ENCODE measurements at regions of chr1 and their contacts with region 1.

Region 1: DNA sequence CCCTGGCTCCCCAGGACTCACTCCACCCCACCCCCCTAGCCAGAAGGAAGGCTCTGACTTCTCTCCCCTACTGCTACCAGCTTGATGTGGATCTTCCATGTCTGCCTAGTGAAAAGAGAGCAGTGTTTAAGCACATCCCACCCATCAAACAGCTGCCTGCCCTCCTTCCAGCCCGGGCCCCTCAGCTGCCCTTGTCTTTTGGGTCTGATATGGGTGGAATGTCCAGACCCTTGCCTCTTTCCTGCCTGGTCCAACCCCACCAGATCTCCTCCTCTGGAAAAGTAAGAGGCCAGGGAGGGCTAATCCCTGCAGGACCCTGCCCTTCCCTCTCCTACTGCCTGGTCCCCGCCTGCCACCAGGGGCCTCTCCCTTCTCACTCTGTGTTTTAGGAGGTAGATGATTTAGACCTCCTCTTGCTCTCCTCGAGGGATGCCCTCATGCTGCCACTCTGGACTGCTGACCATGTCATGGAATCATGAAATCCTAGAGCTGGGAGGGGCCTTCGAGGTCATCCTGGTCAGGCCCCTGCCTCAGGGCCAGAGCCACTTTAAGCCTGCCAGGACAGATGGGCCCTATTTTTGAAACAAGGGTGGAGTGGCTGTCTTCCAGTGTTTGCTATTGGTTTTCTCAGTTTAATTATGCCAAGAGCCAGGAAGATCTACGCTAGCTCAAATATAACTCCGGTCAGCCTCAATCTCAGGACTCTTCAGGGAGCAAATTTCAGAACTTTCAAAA is 15.8 kb upstream of the HSPG2 start:
- DNase-seq: no peak
- ATAC-seq: no peak
- H3K4me3 ChIP-seq: no peak overlapping the region
- H3K27ac ChIP-seq: no peak overlapping the region
- H3K4me1 ChIP-seq: peaks cover 21% of the 10 kb centered on the region
- H3K27me3 ChIP-seq: no peaks in the 10 kb centered on the region
- CTCF ChIP-seq: no peak

Region 2: GRCh38 chr1:21919520-21919919 is 33.4 kb before region 1 on chr1:
- CTCF ChIA-PET with region 1: interaction called, 16 read pairs
- POLR2A ChIA-PET with region 1: no interaction called
- in situ Hi-C with region 1: no loop called
- intact Hi-C with region 1: no loop called
- DNase-seq: no peak
- ATAC-seq: peak; percentile 13; the same call in 1 of the 2 replicates
- H3K4me3 ChIP-seq: no peak overlapping the region
- H3K27ac ChIP-seq: peak overlapping the region; percentile 86
- H3K4me1 ChIP-seq: peaks cover 64% of the 10 kb centered on the region
- H3K27me3 ChIP-seq: no peaks in the 10 kb centered on the region
- CTCF ChIP-seq: no peak

Region 3: GRCh38 chr1:22529901-22530621 is 577.1 kb after region 1 on chr1:
- CTCF ChIA-PET with region 1: no interaction called
- POLR2A ChIA-PET with region 1: no interaction called
- in situ Hi-C with region 1: no loop called
- intact Hi-C with region 1: no loop called
- DNase-seq: no peak
- ATAC-seq: no peak
- H3K4me3 ChIP-seq: no peak overlapping the region
- H3K27ac ChIP-seq: no peak overlapping the region
- H3K4me1 ChIP-seq: no peaks in the 10 kb centered on the region
- H3K27me3 ChIP-seq: no peaks in the 10 kb centered on the region
- CTCF ChIP-seq: no peak

Measured in Panc1 (cell line).